ENCODE measurements at regions of chr20 and their contacts with region 1.

Region 1: GRCh38 chr20:35619196-35620095 is 3.8 kb downstream of the SPAG4 start:
- DNase-seq: peak; percentile 93
- H3K4me3 Mint-ChIP-seq: peak overlapping the region; percentile 92
- H3K27ac Mint-ChIP-seq: peak overlapping the region; percentile 94
- H3K4me1 Mint-ChIP-seq: peaks cover 30% of the 10 kb centered on the region
- H3K27me3 Mint-ChIP-seq: no peaks in the 10 kb centered on the region

Region 2: DNA sequence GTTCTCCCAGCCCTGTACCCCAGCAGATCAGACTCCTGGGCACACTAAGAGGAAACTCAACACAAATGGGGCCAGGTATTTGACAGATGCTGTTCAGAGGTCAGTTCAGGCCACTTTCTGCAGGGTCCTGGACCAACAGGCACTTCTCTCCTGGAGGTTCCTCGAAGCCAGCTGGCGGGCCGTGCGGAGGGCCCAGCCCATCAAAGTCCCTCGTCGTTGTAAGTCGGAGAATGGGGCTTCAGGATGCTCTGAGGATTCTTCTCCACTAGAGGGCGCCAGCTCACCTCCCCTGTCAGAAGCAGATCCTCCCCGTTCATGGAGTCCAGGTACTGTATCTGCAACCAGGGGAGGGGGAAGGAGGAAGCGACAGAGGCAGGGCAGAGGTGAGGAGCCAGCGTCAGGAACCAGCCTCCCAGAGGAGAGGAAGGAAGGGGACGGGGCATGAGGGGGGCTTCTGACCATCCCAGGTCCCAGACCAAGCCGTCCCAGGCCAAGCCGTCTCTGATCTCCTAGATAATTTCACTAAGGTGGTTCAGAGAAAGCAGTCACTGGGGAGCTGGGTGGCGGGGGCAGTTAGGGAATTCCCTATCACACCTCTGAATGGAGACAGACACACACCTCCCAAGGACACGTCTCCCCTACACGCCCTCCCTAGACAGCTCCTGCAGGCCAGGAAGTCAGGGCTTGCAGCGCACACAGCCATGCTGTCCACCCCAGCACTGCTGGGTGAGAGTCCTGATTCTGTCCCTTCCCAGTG is 315.5 kb before region 1 on chr20:
- intact Hi-C with region 1: loop called (anchors 10 kb)
- DNase-seq: peak; percentile 95
- H3K4me3 Mint-ChIP-seq: no peak overlapping the region
- H3K27ac Mint-ChIP-seq: peak overlapping the region; percentile 78
- H3K4me1 Mint-ChIP-seq: peaks cover 41% of the 10 kb centered on the region
- H3K27me3 Mint-ChIP-seq: no peaks in the 10 kb centered on the region

Region 3: GRCh38 chr20:35541783-35542588 is 77.5 kb before region 1 on chr20 and contains the start of gene ERGIC3:
- intact Hi-C with region 1: loop called (anchors 1 kb)
- DNase-seq: peak; percentile 99
- H3K4me3 Mint-ChIP-seq: peak within 1 kb of the TSS; percentile 92
- H3K27ac Mint-ChIP-seq: peak within 1 kb of the TSS; percentile 94
- H3K4me1 Mint-ChIP-seq: peaks cover 16% of the 10 kb centered on the region
- H3K27me3 Mint-ChIP-seq: peaks cover 1% of the 10 kb centered on the region
- total RNA-seq, gene ERGIC3: 123 and 136 TPM in 2 replicates

Region 4: GRCh38 chr20:35664544-35665221 is 45.2 kb after region 1 on chr20 and contains the starts of genes CPNE1 and RBM12:
- intact Hi-C with region 1: loop called (anchors 1 kb)
- DNase-seq: peak; percentile 98
- H3K4me3 Mint-ChIP-seq: peak within 1 kb of the TSS; percentile 91
- H3K27ac Mint-ChIP-seq: peak within 1 kb of the TSS; percentile 99
- H3K4me1 Mint-ChIP-seq: peaks cover 39% of the 10 kb centered on the region
- H3K27me3 Mint-ChIP-seq: no peaks in the 10 kb centered on the region
- total RNA-seq, gene CPNE1: 317 and 318 TPM in 2 replicates
- total RNA-seq, gene RBM12: 148 and 151 TPM in 2 replicates

Region 5: DNA sequence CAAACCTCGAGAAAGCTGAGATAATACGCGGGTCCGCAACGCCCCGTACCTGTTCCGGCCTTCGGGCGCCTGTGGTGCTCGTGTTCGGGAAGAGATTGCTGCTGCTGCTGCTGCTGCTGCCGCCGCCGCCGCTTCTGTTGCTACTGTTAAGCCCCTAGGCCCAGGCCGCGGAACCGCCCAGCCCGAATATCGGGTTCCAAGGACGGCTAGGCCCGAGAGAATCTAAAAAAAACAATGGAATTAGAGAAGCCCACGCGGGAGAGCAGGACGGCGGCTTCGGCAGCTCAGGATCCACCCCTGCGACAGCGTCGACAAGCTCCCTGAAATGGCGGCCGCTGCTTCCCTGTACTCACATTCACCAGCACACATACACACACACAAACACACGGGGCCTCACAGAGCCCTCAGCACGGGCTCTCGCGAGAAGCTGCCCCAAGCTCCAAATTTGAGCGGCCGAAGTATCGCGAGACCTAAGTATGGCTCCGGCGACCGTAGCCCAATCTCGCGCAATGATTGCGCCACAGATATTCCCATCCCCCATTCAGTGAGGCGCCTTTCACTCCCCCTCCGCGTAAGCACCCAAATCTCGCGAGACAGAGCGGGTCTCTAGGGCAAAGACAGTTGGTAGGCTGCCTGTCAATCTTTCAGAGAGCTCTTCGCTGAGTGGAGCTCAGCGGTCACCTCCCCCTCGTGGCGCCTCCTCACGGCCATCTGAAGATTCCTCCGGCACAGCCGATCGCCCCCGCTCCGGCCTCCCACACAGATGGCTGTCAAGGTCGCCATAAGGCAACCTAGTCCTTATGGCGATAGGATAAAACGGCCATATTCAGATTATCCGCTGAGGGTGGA is 122.7 kb after region 1 on chr20 and contains the start of gene RBM39:
- intact Hi-C with region 1: loop called (anchors 1 kb)
- DNase-seq: peak; percentile 100
- H3K4me3 Mint-ChIP-seq: peak within 1 kb of the TSS; percentile 91
- H3K27ac Mint-ChIP-seq: peak within 1 kb of the TSS; percentile 100
- H3K4me1 Mint-ChIP-seq: peaks cover 43% of the 10 kb centered on the region
- H3K27me3 Mint-ChIP-seq: peaks cover 4% of the 10 kb centered on the region
- total RNA-seq, gene RBM39: 352 and 354 TPM in 2 replicates

Region 6: DNA sequence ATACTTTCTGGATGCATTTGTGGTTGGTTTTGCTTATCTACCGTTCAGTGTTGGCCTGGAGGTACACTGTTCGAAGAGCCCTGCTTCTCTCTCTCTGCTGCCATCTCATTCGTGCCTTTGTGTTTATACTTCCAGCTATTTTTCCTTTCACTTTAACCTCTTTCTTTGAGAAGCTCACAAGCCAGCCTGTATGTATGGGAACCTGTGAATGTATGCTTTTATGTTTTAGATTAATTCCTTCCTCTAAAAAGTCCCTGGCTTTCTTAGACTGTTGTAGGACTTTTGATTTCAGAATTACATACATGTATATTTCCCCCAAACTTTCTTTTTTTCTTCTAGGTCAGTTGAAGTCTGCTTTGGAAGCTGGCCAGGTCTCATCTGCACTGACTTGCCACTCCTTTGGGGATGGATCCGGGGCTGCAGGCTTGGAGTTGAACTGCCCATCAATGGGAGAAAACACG is 251.9 kb after region 1 on chr20:
- intact Hi-C with region 1: no loop called
- DNase-seq: no peak
- H3K4me3 Mint-ChIP-seq: no peak overlapping the region
- H3K27ac Mint-ChIP-seq: peak overlapping the region; percentile 41
- H3K4me1 Mint-ChIP-seq: peaks cover 4% of the 10 kb centered on the region
- H3K27me3 Mint-ChIP-seq: no peaks in the 10 kb centered on the region

Region 7: DNA sequence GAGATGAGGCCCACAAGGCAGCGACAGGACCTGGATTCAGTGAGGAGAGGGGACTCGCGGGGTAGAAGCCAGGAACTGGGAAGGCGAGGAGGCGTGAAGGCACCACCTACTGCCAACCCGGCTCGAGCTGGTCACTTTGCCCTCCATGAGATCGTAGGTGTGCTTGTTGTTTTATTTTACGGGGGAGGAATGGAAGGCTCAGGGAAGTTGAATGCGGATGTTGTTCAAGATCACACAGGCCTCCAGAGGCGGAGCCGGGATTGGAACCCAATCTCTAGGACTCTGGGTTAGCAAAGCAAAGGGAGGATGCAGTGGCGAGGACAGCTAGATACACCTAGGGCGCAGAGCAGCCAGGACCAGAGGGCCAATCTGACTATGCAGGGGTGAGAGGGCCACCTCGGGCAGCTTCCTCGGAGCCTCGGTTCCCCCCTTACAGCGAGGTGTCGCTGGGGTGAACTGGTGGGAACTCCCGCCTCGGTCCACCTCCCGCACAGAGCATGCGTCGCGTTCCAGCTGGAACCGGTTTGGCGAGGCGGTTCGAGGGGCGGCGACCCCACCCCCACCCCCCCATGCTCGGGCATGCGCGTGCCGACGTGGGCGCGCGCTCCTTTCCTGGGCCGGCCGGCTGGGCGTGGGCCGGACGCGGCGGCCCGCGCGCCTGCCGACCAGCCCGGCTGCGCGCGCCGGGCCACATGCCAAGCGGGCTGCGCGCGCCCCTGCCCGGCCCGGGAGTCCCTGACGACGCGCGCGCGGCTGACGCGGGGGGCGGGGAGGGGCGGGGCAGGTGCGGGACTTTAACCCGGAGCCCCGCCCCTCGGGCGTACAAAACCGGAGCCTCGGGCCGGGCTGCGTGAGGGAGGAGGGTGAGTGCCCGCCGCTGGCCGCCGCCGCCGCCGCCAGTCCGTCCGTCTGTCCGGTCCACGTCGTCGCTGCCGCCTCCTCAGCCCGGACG is 841.5 kb after region 1 on chr20:
- intact Hi-C with region 1: loop called (anchors 10 kb)
- DNase-seq: peak; percentile 95
- H3K4me3 Mint-ChIP-seq: peak overlapping the region; percentile 74
- H3K27ac Mint-ChIP-seq: peak overlapping the region; percentile 82
- H3K4me1 Mint-ChIP-seq: peaks cover 42% of the 10 kb centered on the region
- H3K27me3 Mint-ChIP-seq: peaks cover 7% of the 10 kb centered on the region